ENCODE measurements at regions of chr15 and their contacts with region 1.

Region 1: GRCh38 chr15:94395640-94396039 is 164.3 kb downstream of the MCTP2 start:
- DNase-seq: no peak
- ATAC-seq: no peak
- H3K4me3 Mint-ChIP-seq: no peak overlapping the region
- H3K27ac Mint-ChIP-seq: no peak overlapping the region
- H3K4me1 Mint-ChIP-seq: no peaks in the 10 kb centered on the region
- H3K27me3 Mint-ChIP-seq: no peaks in the 10 kb centered on the region

Region 2: DNA sequence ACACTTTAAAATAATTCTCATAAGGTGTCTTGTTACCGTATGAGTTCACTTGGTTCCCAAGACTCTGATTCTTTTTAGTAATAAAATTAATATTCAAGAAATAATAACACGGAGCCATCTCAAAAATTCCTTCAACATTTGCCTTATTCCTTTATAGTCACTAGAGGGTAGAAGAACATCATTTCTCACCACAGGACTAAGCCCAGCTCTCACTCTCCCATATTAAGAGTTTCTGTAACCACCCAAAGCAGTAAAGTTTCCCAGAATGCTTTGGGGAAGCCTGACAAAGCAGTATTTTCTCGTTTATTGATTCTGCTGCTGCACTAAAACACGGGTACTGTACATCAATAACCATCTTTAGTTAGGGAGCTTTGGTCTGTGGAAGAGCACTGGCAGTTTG is 49.4 kb before region 1 on chr15:
- CTCF ChIA-PET with region 1: no interaction called
- POLR2A ChIA-PET with region 1: no interaction called
- intact Hi-C with region 1: loop called in 1 of 2 experiments (anchors 5 kb)
- DNase-seq: no peak
- ATAC-seq: no peak
- H3K4me3 Mint-ChIP-seq: no peak overlapping the region
- H3K27ac Mint-ChIP-seq: no peak overlapping the region
- H3K4me1 Mint-ChIP-seq: peaks cover 3% of the 10 kb centered on the region
- H3K27me3 Mint-ChIP-seq: no peaks in the 10 kb centered on the region